ENCODE measurements at regions of chr15 and their contacts with region 1.

Region 1: GRCh38 chr15:73908030-73908821 is 18.0 kb upstream of the LOXL1 start:
- DNase-seq: peak; percentile 87
- H3K4me3 ChIP-seq: no peak overlapping the region
- H3K27ac ChIP-seq: no peak overlapping the region
- H3K4me1 ChIP-seq: no peaks in the 10 kb centered on the region
- H3K27me3 ChIP-seq: no peaks in the 10 kb centered on the region
- CTCF ChIP-seq: peak; percentile 78 to 92 (median 82)
- EP300 ChIP-seq: no peak
- POLR2A ChIP-seq: no peak

Region 2: DNA sequence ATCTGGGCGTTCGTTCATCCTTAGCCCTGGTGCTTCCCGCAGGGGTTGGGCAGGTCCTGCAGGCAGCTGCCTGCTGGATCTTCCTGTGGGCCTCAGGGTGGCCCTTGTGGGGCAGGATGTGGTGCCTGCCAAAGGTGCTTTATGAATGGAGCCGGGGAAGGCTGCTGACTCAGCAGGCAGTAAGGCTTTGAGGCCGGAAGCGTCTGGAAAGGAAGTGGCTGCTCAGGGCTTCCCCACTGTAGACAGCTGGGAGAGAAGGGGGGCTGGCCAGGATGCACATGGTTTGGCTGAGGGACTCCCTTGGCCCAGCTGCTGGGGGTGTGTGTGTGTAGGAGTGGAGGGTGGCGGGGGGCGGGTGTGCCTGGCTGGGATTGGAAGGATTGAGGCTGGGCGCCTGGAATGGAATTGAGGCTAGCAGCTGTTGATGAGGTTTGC is 211.2 kb before region 1 on chr15:
- intact Hi-C with region 1: loop called (anchors 10 kb)
- DNase-seq: peak; percentile 93
- H3K4me3 ChIP-seq: no peak overlapping the region
- H3K27ac ChIP-seq: peak overlapping the region in 2 of 4 donors; percentile 21 to 47
- H3K4me1 ChIP-seq: peaks cover 0 to 48% (median 40%) of the 10 kb centered on the region in 4 donors
- H3K27me3 ChIP-seq: peaks cover 0 to 2% (median 0%) of the 10 kb centered on the region in 3 donors
- CTCF ChIP-seq: no peak
- EP300 ChIP-seq: no peak
- POLR2A ChIP-seq: no peak

Region 3: GRCh38 chr15:73753250-73754130 is 154.7 kb before region 1 on chr15 and contains the start of gene INSYN1:
- intact Hi-C with region 1: loop called (anchors 10 kb)
- DNase-seq: peak; percentile 77
- H3K4me3 ChIP-seq: peak within 1 kb of the TSS; percentile 46 to 90 (median 65)
- H3K27ac ChIP-seq: peak within 1 kb of the TSS; percentile 29 to 72 (median 66)
- H3K4me1 ChIP-seq: peaks cover 0 to 29% (median 23%) of the 10 kb centered on the region in 4 donors
- H3K27me3 ChIP-seq: peaks cover 0 to 6% (median 6%) of the 10 kb centered on the region in 3 donors
- CTCF ChIP-seq: no peak
- EP300 ChIP-seq: no peak
- POLR2A ChIP-seq: no peak
- total RNA-seq, gene INSYN1: 3.6 to 10.0 (median 5.9) TPM

Region 4: DNA sequence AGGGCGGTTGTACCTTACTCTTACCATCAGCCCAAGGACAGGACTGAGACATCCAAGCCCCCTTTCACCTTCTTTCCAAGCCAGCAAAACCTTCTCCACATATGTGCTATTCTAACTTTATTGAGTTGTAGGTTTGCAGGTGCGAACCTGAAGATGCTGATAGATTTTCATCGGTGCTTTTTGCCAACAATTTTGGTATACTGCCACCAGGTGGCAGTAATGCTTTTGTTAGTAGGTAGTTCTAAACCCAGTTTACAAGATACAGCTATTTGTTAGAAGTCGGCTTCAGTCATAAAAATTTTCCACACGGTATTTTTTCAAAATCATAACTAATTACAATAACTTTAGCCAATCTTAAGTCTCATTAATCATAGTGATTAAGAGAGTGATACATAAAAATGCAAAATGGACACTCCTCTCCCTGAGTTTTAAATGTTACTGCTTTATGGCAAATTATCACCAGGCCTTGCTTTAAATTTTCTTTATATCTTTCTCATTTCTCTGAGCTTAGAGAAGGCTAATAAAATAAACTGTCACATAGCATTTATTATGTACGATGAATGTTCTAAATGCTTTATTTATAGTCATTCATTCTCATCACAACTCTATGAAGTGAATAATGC is 34.2 kb before region 1 on chr15:
- intact Hi-C with region 1: loop called (anchors 2 kb)
- DNase-seq: no peak
- H3K4me3 ChIP-seq: no peak overlapping the region
- H3K27ac ChIP-seq: no peak overlapping the region
- H3K4me1 ChIP-seq: no peaks in the 10 kb centered on the region
- H3K27me3 ChIP-seq: peaks cover 0 to 26% (median 8%) of the 10 kb centered on the region in 3 donors
- CTCF ChIP-seq: peak in 3 of 4 experiments; percentile 45 to 60 (median 46)
- EP300 ChIP-seq: no peak
- POLR2A ChIP-seq: no peak

Region 5: DNA sequence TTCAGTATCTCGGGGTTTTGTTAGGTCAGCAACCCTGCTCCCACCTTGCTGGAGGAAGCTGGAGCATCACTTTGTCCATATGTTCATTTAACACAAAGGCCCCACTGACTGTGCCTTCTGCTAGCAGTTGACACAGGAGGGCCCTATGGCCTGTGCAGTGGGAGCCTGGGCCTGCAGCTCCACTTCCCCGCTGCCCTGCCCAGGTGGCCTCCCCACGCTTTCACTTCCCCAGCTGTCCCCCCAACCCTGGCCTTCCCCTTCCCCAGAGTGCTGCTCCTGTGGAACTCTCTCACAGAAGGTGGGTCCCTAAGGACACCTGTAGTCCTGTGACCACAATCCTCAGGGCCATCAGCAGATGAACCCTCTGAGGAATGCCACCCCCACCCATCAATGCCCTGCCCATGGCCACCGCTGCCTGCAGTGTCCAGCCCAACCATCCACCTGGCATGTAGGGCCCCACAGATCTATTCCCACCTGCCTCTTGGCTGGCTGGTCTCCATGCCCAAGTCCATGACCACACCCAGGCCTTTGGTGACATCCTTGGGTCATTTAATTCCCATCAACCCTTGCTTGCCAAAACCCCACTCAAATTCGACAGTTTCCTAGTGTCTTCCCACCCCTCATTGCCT is 21.4 kb before region 1 on chr15:
- intact Hi-C with region 1: no loop called
- DNase-seq: no peak
- H3K4me3 ChIP-seq: no peak overlapping the region
- H3K27ac ChIP-seq: no peak overlapping the region
- H3K4me1 ChIP-seq: no peaks in the 10 kb centered on the region
- H3K27me3 ChIP-seq: peaks cover 0 to 5% (median 0%) of the 10 kb centered on the region in 3 donors
- CTCF ChIP-seq: no peak
- EP300 ChIP-seq: no peak
- POLR2A ChIP-seq: no peak

Measured in sigmoid colon (tissue), 7 donors.